ENCODE measurements at regions of chr1 and their contacts with region 1.

Region 1: DNA sequence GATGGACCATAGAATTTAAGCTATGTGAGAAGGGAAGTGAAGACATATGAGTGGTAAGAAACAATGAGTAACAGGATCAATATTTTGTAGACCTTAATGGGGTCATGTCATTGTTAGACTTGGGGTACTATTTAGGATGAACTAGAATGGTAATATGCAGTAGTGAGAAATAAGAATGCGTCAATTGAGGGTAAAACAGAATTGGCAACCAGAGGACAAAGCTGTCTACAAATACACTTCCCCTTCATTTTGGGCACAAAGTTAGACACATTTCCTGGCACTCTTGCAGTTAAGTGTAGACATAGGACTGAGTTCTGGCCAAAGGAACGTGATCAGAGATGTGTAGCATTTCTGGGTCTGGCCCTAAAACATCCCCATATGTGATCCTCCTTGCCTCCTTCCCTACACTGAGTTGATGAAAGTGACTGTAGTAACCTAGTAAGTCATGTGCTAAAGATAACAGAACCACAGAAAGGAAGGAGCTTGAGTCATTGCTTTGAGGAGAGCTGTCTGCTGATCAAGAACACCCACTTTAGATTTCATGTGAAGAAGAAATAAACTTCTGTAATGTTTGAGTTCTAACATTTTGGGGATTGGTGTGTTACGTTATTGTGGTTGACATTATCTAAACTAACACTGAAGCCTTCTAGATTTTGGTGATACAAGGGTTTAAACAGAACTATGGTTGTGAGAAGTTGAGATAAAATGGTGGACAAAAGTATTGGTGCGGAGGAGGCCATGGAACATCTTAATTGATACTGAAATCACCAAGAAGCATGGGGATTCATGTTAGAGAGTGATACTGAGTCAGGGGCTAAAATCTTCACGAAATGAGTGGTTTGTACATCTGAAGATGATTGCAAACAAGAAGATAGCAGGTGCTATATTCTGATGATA is 41.7 kb downstream of the CD55 start:
- DNase-seq: peak; percentile 18
- H3K4me3 Mint-ChIP-seq: no peak overlapping the region
- H3K27ac Mint-ChIP-seq: no peak overlapping the region
- H3K4me1 Mint-ChIP-seq: no peaks in the 10 kb centered on the region
- H3K27me3 Mint-ChIP-seq: no peaks in the 10 kb centered on the region

Region 2: DNA sequence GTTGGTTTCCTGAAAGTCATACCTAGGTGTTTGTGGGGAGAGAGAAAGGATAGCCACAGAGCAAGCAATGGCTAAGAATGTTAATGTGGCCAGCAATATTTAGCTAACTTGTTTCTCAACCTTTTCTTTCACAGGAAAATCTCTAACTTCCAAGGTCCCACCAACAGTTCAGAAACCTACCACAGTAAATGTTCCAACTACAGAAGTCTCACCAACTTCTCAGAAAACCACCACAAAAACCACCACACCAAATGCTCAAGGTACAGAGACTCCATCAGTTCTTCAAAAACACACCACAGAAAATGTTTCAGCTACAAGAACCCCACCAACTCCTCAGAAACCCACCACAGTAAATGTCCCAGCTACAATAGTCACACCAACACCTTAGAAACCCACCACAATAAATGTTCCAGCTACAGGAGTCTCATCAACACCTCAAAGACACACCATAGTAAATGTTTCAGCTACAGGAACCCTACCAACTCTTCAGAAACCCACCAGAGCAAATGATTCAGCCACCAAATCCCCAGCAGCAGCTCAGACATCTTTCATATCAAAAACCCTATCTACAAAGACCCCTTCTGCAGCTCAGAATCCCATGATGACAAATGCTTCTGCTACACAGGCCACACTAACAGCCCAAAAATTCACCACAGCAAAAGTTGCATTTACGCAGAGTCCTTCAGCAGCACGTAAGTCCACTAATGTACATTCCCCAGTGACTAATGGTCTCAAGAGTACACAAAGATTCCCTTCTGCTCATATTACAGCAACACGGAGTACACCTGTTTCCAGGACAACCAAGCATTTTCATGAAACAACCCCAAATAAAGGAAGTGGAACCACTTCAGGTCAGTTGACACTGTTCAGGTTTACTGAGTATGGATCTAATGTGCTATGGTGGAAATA is 26.4 kb before region 1 on chr1:
- CTCF ChIA-PET with region 1: interaction called, 6 read pairs
- POLR2A ChIA-PET with region 1: interaction called, 19 read pairs
- intact Hi-C with region 1: loop called (anchors 1 kb)
- DNase-seq: peak; percentile 39
- H3K4me3 Mint-ChIP-seq: no peak overlapping the region
- H3K27ac Mint-ChIP-seq: peak overlapping the region; percentile 86
- H3K4me1 Mint-ChIP-seq: peaks cover 58% of the 10 kb centered on the region
- H3K27me3 Mint-ChIP-seq: no peaks in the 10 kb centered on the region

Region 3: GRCh38 chr1:207352554-207352953 is 10.7 kb before region 1 on chr1:
- CTCF ChIA-PET with region 1: no interaction called
- POLR2A ChIA-PET with region 1: no interaction called
- intact Hi-C with region 1: no loop called
- DNase-seq: no peak
- H3K4me3 Mint-ChIP-seq: no peak overlapping the region
- H3K27ac Mint-ChIP-seq: no peak overlapping the region
- H3K4me1 Mint-ChIP-seq: peaks cover 23% of the 10 kb centered on the region
- H3K27me3 Mint-ChIP-seq: no peaks in the 10 kb centered on the region

Region 4: DNA sequence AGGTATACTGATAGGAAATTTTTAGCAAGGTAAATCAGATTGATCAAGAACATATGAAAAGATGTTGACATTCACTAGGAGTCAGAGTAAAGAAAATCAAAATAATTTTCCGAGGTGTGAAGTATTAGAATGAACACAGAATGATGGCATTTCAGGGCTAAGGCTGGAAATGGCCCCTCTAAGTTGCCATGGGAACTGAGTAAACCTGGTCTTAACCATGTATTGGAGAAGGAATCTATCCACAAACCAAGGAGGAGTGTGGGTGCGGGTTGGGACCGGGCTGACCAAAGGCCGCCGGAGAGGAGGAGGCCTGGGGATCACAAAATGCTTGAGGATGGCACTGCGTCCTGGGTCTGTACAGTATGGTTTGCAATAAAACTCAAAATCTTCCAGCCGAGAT is 11.7 kb after region 1 on chr1:
- CTCF ChIA-PET with region 1: interaction called, 3 read pairs
- POLR2A ChIA-PET with region 1: no interaction called
- intact Hi-C with region 1: loop called (anchors 2 kb)
- DNase-seq: no peak
- H3K4me3 Mint-ChIP-seq: no peak overlapping the region
- H3K27ac Mint-ChIP-seq: no peak overlapping the region
- H3K4me1 Mint-ChIP-seq: no peaks in the 10 kb centered on the region
- H3K27me3 Mint-ChIP-seq: no peaks in the 10 kb centered on the region

Region 5: DNA sequence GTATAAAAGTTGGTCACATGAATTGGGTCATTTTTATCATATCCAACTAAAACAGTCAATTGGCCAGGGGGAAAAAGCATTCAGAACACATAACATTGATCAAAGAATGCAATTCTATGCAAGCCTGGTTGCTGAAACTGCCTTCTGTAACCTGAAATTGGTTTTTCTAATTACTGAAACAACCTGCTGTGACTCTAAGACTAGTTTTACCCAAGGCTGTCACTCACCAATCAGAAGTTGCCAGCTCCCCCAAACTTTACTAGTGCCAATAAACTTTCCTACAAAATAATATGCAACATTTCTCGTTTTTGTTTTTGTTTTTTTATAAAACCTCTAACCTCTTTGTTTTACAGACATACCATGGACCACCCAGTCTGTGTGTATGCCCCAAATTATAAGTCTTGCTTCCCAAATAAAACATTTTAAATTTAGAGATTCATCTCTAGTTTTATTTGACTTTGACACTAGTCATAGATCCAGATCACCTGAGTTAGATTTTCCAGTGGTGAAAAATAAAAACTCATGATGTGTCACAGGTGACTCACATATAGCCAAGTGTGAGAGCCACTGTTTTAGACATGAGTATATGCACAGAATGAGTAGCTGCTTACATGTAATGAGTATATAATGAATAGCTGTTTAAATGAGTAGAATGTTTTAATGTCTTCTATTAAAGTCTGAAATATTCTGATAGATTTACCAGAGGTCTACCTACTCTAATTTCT is 26.7 kb after region 1 on chr1:
- CTCF ChIA-PET with region 1: interaction called, 3 read pairs
- POLR2A ChIA-PET with region 1: interaction called, 4 read pairs
- intact Hi-C with region 1: loop called (anchors 1 kb)
- DNase-seq: no peak
- H3K4me3 Mint-ChIP-seq: no peak overlapping the region
- H3K27ac Mint-ChIP-seq: peak overlapping the region; percentile 30
- H3K4me1 Mint-ChIP-seq: peaks cover 7% of the 10 kb centered on the region
- H3K27me3 Mint-ChIP-seq: peaks cover 12% of the 10 kb centered on the region